ENCODE measurements at regions of chr17 and their contacts with region 1.

Region 1: DNA sequence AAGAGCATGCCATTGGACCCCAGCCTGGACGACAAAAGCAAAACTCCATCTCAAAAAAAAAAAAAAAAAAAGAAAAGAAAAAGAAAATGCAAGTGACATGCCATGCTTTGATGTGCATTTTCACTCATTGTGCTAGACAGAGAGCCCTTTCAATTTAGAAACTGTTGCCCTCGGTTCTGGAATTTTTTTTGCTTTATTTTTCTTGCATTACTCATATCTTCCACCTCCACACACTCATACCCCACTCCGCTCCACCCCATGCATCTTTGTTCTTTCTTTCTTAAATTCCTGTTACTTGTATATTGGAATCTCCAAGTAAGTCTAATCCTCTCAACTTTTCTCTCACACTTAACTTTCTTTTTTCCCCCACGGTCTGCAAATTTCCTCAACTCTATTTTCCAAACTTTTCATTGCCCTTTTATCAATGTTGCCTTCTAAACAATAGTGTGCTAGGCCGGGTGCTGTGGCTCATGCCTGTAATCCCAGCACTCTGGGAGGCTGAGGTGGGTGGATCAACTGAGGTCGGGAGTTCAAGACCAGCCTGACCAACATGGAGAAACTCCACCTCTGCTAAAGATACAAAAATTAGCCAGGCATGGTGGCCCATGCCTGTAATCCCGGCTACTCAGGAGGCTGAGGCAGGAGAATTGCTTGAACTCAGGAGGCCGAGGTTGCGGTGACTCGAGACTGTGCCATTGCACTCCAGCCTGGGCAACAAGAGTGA is 16.8 kb upstream of the SUZ12 start:
- DNase-seq: peak; percentile 38
- ATAC-seq: peak; percentile 96
- H3K4me3 Mint-ChIP-seq: peak overlapping the region; percentile 40
- H3K27ac Mint-ChIP-seq: peak overlapping the region; percentile 83
- H3K4me1 Mint-ChIP-seq: peaks cover 13% of the 10 kb centered on the region
- H3K27me3 Mint-ChIP-seq: peaks cover 16% of the 10 kb centered on the region
- CTCF ChIP-seq: no peak

Region 2: DNA sequence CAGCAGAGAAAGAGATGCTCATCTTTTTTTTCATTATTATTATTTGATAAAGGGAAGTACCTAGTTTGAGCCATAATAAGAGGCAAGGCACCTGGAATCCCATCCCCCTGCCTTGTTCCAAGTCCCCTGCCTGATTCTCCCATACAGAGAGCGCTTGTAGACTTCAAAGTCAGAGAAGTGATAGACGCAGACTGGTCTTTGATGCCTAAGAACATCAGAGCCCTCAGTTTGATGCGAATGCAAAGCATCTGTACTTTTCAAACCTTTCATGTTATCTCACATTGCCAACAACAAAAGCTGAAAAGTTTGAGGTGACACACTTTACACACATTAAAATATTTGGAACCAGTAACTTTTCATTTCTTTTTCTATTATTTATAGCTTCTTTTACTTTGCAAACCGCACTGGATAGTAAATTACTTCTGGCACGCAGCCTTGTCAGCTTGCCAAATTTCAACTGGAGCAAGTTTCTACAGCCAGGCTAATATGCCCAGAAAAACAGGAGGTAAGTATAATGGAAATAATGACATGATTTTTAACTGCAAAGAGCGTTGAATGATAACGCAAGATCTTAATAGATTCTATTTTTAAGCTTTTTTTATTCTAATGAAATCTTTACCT is 12.5 kb before region 1 on chr17:
- CTCF ChIA-PET with region 1: interaction called, 13 read pairs
- POLR2A ChIA-PET with region 1: interaction called, 3 read pairs
- intact Hi-C with region 1: no loop called
- DNase-seq: no peak
- ATAC-seq: peak; percentile 45
- H3K4me3 Mint-ChIP-seq: no peak overlapping the region
- H3K27ac Mint-ChIP-seq: no peak overlapping the region
- H3K4me1 Mint-ChIP-seq: peaks cover 23% of the 10 kb centered on the region
- H3K27me3 Mint-ChIP-seq: peaks cover 16% of the 10 kb centered on the region
- CTCF ChIP-seq: no peak

Region 3: DNA sequence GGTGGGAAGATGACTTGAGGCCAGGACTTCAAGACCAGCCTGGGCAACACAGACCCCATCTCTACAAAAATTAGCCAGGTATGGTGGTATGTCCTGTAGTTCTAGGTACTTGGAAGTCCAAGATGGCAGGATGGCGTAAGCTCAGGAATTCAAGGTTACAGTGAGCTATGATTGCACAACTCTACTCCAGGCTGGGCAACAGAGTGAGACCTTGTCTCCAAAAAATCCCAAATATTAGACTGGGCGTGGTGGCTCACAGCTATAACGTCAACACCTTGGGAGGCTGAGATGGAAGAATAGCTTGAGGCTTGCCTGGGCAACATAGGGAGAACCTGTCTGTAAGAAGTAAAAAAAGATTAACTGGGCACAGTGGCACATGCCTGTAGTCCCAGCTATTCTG is 47.7 kb after region 1 on chr17:
- CTCF ChIA-PET with region 1: no interaction called
- POLR2A ChIA-PET with region 1: no interaction called
- intact Hi-C with region 1: no loop called
- DNase-seq: no peak
- ATAC-seq: no peak
- H3K4me3 Mint-ChIP-seq: no peak overlapping the region
- H3K27ac Mint-ChIP-seq: no peak overlapping the region
- H3K4me1 Mint-ChIP-seq: peaks cover 2% of the 10 kb centered on the region
- H3K27me3 Mint-ChIP-seq: no peaks in the 10 kb centered on the region
- CTCF ChIP-seq: no peak